Breast epithelium (tissue), 4 donors: ENCODE measurements at regions of chr12 and their contacts with region 1.

Region 1: GRCh38 chr12:78101946-78102635 is 271.4 kb downstream of the NAV3 start:
- DNase-seq: no peak
- H3K4me3 ChIP-seq: no peak overlapping the region
- H3K27ac ChIP-seq: no peak overlapping the region
- H3K4me1 ChIP-seq: no peaks in the 10 kb centered on the region
- H3K27me3 ChIP-seq: no peaks in the 10 kb centered on the region
- CTCF ChIP-seq: no peak
- POLR2A ChIP-seq: no peak

Region 2: GRCh38 chr12:78081590-78082314 is 20.3 kb before region 1 on chr12:
- intact Hi-C with region 1: loop called (anchors 2 kb)
- DNase-seq: no peak
- H3K4me3 ChIP-seq: no peak overlapping the region
- H3K27ac ChIP-seq: no peak overlapping the region
- H3K4me1 ChIP-seq: no peaks in the 10 kb centered on the region
- H3K27me3 ChIP-seq: no peaks in the 10 kb centered on the region
- CTCF ChIP-seq: no peak
- POLR2A ChIP-seq: no peak